A549 (cell line): ENCODE measurements at regions of chr1 and their contacts with region 1.

Region 1: GRCh38 chr1:66929999-66930822 is 5.4 kb downstream of the MIER1 start:
- DNase-seq: peak; percentile 32 to 93
- ATAC-seq: peak; percentile 79 to 83
- H3K4me3 ChIP-seq: peak overlapping the region; percentile 77
- H3K27ac ChIP-seq: peak overlapping the region; percentile 91 to 99
- H3K4me1 ChIP-seq: peaks cover 41% of the 10 kb centered on the region
- CTCF ChIP-seq: no peak
- EP300 ChIP-seq: no peak
- POLR2A ChIP-seq: peak; percentile 8; the same call in 1 of the 2 replicates
- RAD21 ChIP-seq: no peak

Region 2: DNA sequence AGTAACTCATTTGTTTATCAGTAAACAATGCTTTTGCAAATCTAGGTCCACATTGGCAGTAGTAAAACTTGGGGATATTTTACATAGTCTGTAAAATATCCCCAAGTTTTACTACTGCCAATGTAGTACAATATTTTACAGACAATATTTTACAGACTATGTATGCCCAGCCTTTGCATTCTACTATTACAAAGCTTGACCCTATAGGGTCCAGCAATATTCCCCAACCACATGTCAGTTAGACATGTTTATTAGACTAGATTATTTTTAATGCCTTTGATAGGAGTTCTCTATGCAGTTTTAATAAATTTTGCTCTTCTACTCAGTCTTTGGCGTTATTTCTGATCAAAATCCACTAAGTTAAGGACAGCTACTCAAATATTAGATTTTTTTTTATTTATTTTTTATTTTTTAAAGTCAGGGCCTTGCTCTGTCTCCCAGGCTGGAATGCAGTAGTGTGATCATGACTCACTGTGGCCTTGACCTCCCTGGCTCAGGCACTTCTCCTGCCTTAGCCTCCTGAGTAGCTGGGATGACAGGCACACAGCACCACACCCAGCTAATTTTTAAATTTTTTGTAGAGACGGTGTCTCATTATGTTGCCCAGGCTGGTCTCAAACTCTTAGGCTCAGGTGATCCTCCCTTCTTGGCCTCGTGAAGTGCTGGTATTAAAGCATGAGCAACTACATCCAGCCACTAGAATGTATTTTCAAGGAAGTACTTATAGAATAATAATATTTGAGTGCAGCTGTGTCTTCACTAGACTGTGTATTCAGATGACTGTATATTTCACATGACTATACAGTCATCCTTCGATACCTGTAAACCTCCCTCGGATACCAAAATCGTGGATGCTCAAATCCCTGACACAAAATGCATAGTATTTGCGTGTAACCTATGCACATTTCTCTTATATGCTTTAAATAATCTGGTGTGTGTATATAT is 14.4 kb after region 1 on chr1:
- CTCF ChIA-PET with region 1: interaction called, 3 read pairs
- POLR2A ChIA-PET with region 1: interaction called, 16 read pairs
- DNase-seq: peak in 1 of 2 experiments; percentile 53
- ATAC-seq: peak; percentile 90 to 93
- H3K4me3 ChIP-seq: no peak overlapping the region; the same call in 2 of the 3 replicates
- H3K27ac ChIP-seq: peak overlapping the region; percentile 73 to 86
- H3K4me1 ChIP-seq: peaks cover 69% of the 10 kb centered on the region
- CTCF ChIP-seq: no peak
- EP300 ChIP-seq: 0 out of 5 replicates have a peak, but pooled peaks of 1 of the 2 experiments have one; percentile 11
- POLR2A ChIP-seq: no peak
- RAD21 ChIP-seq: no peak